ENCODE measurements at regions of chr5 and their contacts with region 1.

Region 1: DNA sequence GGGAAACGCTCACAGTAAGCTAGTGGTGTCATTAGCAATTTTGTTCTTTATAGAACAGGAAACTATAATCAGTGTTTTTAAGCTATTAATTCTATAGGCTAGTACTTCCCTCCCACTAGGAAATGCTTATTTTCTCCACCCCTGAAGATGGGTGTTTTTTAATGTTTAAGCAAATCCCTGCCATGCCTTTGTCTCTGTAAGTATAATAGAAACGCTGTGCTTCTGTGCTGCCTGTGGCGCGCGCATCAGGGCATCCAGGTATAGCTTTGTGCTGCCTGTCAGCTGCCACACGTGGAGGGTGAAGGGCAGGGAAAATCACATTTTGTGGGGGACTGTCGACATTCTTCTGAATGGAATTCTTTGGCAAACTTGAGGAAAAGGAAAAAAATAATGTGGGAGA is 217.5 kb downstream of the RAB3C start:
- DNase-seq: no peak
- H3K4me3 ChIP-seq: no peak overlapping the region
- H3K4me3 Mint-ChIP-seq: no peak overlapping the region
- H3K27ac Mint-ChIP-seq: no peak overlapping the region
- H3K4me1 ChIP-seq: no peaks in the 10 kb centered on the region
- H3K4me1 Mint-ChIP-seq: no peaks in the 10 kb centered on the region
- H3K27me3 ChIP-seq: no peaks in the 10 kb centered on the region; the same call in 1 of the 2 replicates
- H3K27me3 Mint-ChIP-seq: peaks cover 7% of the 10 kb centered on the region
- CTCF ChIP-seq: no peak

Region 2: DNA sequence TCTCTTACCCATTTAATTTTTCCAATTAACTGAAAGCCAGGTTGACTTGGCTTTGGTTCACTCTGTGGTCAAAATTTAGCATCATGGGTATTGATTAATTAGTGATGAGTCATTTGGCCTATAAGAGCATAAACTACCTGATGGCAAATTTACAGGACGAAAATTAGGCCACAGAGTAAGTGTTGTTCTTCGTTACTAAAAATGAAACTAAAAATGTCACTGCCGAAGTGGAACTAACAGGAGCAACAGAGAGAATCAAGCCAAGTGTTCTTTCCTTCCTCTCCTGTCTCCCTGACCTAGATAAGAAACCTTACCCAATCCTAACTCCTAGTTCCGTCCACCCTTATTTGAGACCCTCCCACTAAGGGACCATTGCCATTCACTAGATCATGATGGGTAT is 40.6 kb before region 1 on chr5:
- CTCF ChIA-PET with region 1: no interaction called
- POLR2A ChIA-PET with region 1: no interaction called
- intact Hi-C with region 1: loop called (anchors 5 kb)
- DNase-seq: no peak
- H3K4me3 ChIP-seq: no peak overlapping the region
- H3K4me3 Mint-ChIP-seq: no peak overlapping the region
- H3K27ac Mint-ChIP-seq: no peak overlapping the region
- H3K4me1 ChIP-seq: no peaks in the 10 kb centered on the region
- H3K4me1 Mint-ChIP-seq: no peaks in the 10 kb centered on the region
- H3K27me3 ChIP-seq: no peaks in the 10 kb centered on the region
- H3K27me3 Mint-ChIP-seq: peaks cover 2% of the 10 kb centered on the region
- CTCF ChIP-seq: no peak

Region 3: GRCh38 chr5:58786711-58787303 is 13.5 kb before region 1 on chr5:
- CTCF ChIA-PET with region 1: no interaction called
- POLR2A ChIA-PET with region 1: no interaction called
- intact Hi-C with region 1: no loop called
- DNase-seq: no peak
- H3K4me3 ChIP-seq: no peak overlapping the region
- H3K4me3 Mint-ChIP-seq: no peak overlapping the region
- H3K27ac Mint-ChIP-seq: no peak overlapping the region
- H3K4me1 ChIP-seq: no peaks in the 10 kb centered on the region
- H3K4me1 Mint-ChIP-seq: no peaks in the 10 kb centered on the region
- H3K27me3 ChIP-seq: peaks cover 1% of the 10 kb centered on the region; the same call in 1 of the 2 replicates
- H3K27me3 Mint-ChIP-seq: peaks cover 5% of the 10 kb centered on the region
- CTCF ChIP-seq: no peak

Measured in Caco-2 (cell line).